ENCODE measurements at regions of chr15 and their contacts with region 1.

Region 1: DNA sequence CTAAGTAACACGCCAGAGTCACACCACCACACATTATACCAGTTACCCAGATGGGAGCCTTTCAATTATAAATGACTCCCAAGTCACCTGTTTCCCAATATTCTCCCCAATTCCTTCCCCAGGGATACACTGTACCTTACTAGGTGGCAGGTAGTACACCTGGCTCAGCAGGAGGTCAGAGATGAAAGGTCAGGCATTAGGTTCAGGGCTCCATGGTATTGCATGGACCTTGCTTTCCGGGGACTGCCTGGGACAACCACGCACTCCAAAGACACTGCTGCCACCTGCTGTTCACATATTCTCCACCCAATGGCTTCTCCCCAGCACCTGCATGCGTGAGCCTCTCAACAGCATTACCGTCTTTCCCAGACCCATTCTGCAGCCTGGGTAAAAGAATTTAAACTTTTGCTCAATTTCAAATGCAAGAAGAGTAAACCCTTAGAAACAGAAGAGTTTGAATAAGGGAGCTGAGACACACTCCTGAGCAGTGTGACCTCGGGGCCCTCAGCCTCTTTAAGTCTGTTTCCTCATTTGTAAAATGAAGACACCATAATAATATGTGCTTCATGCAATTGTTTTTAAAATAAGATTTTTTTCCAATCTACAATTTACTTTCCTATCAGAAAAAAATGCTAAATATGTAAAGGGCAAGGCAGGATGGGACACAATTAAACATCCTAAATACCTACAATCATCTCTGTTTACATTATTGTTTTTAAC is 28.0 kb upstream of the LACTB start:
- DNase-seq: peak; percentile 77 to 78
- H3K4me3 ChIP-seq: no peak overlapping the region
- H3K27ac ChIP-seq: no peak overlapping the region
- H3K4me1 ChIP-seq: no peaks in the 10 kb centered on the region
- H3K27me3 ChIP-seq: no peaks in the 10 kb centered on the region
- CTCF ChIP-seq: peak; percentile 56 to 91 (median 85)
- POLR2A ChIP-seq: no peak

Region 2: DNA sequence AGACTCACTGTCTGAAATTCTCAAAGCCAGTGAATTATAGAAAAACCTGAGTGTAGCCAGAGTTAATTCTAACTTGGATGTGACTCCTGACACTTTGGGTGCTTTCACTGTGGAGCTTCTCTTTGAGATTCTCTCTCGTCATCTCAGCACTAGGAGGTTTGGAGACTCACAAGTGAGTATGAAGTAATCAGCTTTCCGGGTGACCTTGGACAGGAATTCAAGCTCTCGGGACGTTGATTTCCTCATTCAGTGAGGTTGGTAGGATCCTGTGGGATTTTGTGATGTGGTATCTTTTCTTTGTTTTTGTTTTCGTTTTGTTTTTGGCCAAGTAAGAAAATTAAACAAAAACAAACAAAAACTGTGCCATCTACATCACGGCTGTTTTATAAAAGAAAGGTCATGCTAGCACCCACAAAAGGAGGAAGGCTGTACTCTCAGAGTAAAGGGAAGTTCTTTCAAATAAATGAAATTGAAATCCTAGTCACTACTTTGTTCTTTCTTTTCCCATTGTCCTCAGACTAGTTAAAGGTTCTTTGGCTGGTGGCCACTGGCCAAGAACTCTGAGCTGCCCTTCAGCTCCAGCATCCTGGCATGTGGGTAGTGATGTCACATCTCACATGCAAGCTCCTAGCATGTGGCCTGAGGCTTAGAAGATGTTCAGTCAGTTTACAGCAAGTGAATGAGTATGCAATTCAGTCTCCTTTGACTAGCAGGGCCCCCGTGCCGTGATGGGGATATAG is 314.4 kb before region 1 on chr15:
- intact Hi-C with region 1: loop called (anchors 5 kb)
- DNase-seq: peak in 1 of 2 donors; percentile 41
- H3K4me3 ChIP-seq: no peak overlapping the region
- H3K27ac ChIP-seq: peak overlapping the region in 1 of 2 donors; percentile 57
- H3K4me1 ChIP-seq: peaks cover 5% of the 10 kb centered on the region in 2 donors
- H3K27me3 ChIP-seq: no peaks in the 10 kb centered on the region
- CTCF ChIP-seq: no peak
- POLR2A ChIP-seq: no peak

Region 3: GRCh38 chr15:63048115-63048775 is 45.4 kb before region 1 on chr15:
- intact Hi-C with region 1: loop called (anchors 5 kb)
- DNase-seq: peak; percentile 90 to 91
- H3K4me3 ChIP-seq: peak overlapping the region; percentile 85 to 93 (median 90)
- H3K27ac ChIP-seq: peak overlapping the region; percentile 93 to 95
- H3K4me1 ChIP-seq: peaks cover 0 to 34% of the 10 kb centered on the region in 2 donors
- H3K27me3 ChIP-seq: no peaks in the 10 kb centered on the region
- CTCF ChIP-seq: peak; percentile 95 to 96 (median 95)
- POLR2A ChIP-seq: no peak

Region 4: DNA sequence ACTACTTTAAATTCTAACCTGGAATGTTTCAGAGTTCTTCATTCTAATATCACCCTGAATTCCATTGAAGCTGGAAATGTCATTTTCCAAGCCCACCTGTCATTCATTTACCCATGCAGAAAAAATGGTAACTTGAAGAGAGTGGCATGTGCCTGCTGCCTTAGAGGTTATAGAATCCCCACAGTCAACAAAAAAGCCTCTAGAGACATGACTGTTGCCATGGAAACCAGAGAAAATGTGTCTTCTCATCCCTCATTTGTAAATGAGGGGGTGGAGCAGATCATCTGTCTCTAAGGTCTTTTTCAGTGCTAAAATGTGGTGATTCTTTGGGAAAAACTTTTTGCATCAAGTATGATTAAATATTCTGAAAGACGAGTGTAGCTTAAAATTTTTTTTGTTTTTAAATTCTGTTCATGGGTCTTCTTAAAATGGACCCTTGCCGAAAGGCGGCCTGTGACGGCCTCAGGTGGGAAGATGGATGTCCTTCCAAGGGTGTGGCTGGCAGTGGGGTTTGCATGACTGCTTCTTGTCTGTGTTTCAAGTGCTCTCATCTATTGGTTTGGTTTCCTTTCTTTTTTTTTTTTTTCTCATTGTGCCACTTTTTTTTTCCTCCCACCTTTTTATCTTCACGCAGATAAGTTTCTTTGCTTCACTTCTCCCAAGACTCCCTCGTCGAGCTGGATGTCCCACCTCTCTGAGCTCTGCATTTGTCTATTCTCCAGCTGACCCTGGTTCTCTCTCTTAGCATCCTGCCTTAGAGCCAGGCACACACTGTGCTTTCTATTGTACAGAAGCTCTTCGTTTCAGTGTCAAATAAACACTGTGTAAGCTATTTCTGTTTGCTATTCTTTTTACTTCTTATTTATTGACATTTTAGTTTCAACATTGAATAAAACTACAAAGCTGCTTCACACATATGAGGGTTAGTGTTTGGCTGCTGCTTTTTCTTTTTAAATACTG is 28.1 kb before region 1 on chr15:
- intact Hi-C with region 1: no loop called
- DNase-seq: no peak
- H3K4me3 ChIP-seq: no peak overlapping the region
- H3K27ac ChIP-seq: no peak overlapping the region
- H3K4me1 ChIP-seq: no peaks in the 10 kb centered on the region
- H3K27me3 ChIP-seq: no peaks in the 10 kb centered on the region
- CTCF ChIP-seq: no peak
- POLR2A ChIP-seq: no peak